ENCODE measurements at regions of chr4 and their contacts with region 1.

Region 1: DNA sequence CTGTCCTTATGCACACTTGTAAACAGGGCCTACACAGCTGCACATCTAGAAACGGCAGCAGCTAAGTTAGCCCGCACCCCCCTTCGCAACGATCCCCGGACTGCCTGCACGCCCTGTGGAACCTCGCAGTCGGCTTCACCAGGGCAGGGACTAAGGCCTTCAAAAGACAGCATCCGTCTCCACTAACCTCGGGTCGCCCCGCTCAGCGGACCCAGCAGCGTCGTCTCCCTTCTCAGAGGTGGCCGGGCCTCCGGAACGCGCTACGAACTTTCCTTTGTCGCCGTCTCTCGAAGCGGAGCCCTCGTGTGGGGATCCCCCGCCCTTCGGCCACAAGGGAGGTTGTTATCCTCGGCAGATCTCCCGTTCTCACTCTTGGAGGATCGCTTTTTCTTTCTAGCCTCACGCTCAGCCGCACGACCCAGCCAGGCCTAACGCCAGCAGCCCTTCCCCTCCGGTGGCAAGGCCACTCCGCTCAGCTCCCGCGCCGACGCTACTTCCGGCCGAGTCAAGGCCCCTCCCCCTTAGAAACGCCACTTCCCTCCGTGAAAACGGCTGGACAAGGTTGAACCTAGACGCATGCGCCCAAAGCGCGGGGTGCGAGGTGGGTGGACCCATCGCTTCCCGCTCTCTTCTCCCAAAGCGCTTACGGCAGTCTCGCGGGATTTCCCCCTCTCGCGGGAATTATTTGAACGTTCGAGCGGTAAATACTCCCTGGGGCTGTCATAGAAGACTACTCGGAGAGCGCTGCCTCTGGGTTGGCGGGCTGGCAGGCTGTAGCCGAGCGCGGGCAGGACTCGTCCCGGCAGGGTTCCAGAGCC is at the starts of genes DCAF16 and NCAPG:
- DNase-seq: peak; percentile 99 to 100
- ATAC-seq: peak; percentile 100
- H3K4me3 ChIP-seq: peak within 1 kb of the TSS; percentile 63 to 91 (median 84)
- H3K27ac ChIP-seq: peak within 1 kb of the TSS; percentile 88 to 98 (median 95)
- H3K4me1 ChIP-seq: peaks cover 0 to 63% (median 41%) of the 10 kb centered on the region in 9 donors
- H3K27me3 ChIP-seq: no peaks in the 10 kb centered on the region
- CTCF ChIP-seq: no peak
- total RNA-seq, gene DCAF16: 15.7 to 22.0 (median 19.7) TPM
- total RNA-seq, gene NCAPG: 0.08 to 3.6 (median 0.33) TPM

Region 2: GRCh38 chr4:17552427-17552826 is 258.0 kb before region 1 on chr4:
- intact Hi-C with region 1: loop called in 8 of 10 experiments (anchors 2 to 10 kb)
- DNase-seq: no peak
- ATAC-seq: no peak
- H3K4me3 ChIP-seq: no peak overlapping the region
- H3K27ac ChIP-seq: no peak overlapping the region
- H3K4me1 ChIP-seq: peaks cover 0 to 4% (median 0%) of the 10 kb centered on the region in 9 donors
- H3K27me3 ChIP-seq: peaks cover 0 to 25% (median 4%) of the 10 kb centered on the region in 7 donors
- CTCF ChIP-seq: no peak

Region 3: DNA sequence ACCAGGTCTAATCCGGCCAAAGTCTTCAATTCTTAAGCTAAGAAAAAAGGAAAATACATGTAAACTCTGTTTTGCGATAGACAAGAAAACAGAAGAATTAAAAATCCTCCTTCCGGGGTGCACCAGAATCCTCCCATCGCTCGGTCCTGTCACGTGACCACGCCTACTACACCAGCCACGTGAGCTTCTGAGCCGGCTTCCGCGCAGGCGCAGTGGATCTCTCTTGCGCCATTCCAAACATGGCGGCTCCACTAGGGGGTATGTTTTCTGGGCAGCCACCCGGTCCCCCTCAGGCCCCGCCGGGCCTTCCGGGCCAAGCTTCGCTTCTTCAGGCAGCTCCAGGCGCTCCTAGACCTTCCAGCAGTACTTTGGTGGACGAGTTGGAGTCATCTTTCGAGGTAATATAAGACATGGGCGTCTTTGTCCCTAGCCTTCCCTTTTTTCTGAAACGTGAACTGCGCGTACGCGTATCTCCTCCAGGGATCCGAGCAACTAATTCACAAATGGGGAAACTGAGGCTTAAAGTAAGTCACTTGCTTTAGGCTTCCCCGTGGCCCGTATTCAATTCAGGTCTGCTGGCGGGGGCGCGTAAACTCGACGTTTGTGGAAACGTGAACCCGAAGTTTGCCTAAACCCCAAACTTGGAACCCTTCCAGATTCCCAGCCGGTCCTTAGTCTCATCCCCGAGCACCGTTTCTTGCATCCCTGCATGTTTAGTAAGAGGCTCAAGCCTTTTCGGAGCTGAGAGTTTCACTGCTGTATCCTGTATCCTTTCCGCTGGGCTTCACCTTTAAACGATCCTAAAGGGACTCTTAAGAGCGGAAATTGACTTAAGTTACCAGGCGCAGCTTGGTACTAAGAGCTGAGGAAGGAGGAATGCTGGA is 195.8 kb before region 1 on chr4 and contains the start of gene MED28:
- intact Hi-C with region 1: loop called in 2 of 10 experiments (anchors 10 kb)
- DNase-seq: peak; percentile 95 to 96
- ATAC-seq: peak; percentile 94 to 99 (median 98)
- H3K4me3 ChIP-seq: peak within 1 kb of the TSS; percentile 66 to 100 (median 87)
- H3K27ac ChIP-seq: peak within 1 kb of the TSS; percentile 43 to 98 (median 84)
- H3K4me1 ChIP-seq: peaks cover 10 to 50% (median 45%) of the 10 kb centered on the region in 9 donors
- H3K27me3 ChIP-seq: no peaks in the 10 kb centered on the region
- CTCF ChIP-seq: peak in 4 of 9 donors; percentile 21 to 43 (median 26)
- total RNA-seq, gene MED28: 13.8 to 23.1 (median 17.4) TPM

Region 4: DNA sequence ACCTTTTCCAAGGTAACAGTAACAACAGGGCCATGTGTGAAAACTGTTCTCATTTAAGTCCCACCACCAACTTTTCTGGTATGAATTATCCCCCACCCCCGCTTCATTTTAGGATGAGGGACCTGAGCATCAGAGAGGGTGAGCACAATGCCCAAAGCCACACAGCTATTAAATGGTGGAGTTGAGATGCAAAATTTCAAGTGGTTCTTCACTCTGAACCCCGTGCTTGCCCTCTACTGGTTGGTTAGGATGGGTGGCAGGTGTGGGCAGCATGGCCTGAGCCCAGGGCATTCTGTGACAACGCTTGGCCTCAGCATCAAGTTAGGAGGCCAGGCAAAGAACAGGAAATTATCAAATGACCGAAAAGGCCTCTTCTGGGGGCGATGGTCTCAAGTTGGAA is 162.5 kb before region 1 on chr4:
- intact Hi-C with region 1: no loop called
- DNase-seq: no peak
- ATAC-seq: no peak
- H3K4me3 ChIP-seq: no peak overlapping the region
- H3K27ac ChIP-seq: no peak overlapping the region
- H3K4me1 ChIP-seq: no peaks in the 10 kb centered on the region
- H3K27me3 ChIP-seq: no peaks in the 10 kb centered on the region
- CTCF ChIP-seq: no peak

Region 5: GRCh38 chr4:17721496-17722355 is 88.7 kb before region 1 on chr4:
- intact Hi-C with region 1: no loop called
- DNase-seq: no peak
- ATAC-seq: peak in 4 of 8 donors; percentile 25 to 56 (median 44)
- H3K4me3 ChIP-seq: no peak overlapping the region
- H3K27ac ChIP-seq: no peak overlapping the region
- H3K4me1 ChIP-seq: peaks cover 0 to 3% (median 0%) of the 10 kb centered on the region in 9 donors
- H3K27me3 ChIP-seq: no peaks in the 10 kb centered on the region
- CTCF ChIP-seq: no peak

Region 6: GRCh38 chr4:18366892-18367291 is 556.4 kb after region 1 on chr4:
- intact Hi-C with region 1: loop called in 7 of 10 experiments (anchors 5 to 10 kb)
- DNase-seq: no peak
- ATAC-seq: peak in 4 of 8 donors; percentile 15 to 53 (median 46)
- H3K4me3 ChIP-seq: no peak overlapping the region
- H3K27ac ChIP-seq: no peak overlapping the region
- H3K4me1 ChIP-seq: no peaks in the 10 kb centered on the region
- H3K27me3 ChIP-seq: no peaks in the 10 kb centered on the region
- CTCF ChIP-seq: peak in 8 of 9 donors; percentile 7 to 55 (median 50)

Measured in heart right ventricle (tissue), 16 donors.